ENCODE measurements at regions of chr4 and their contacts with region 1.

Region 1: GRCh38 chr4:143335979-143336780 is 496 bp upstream of the GAB1 start:
- DNase-seq: peak; percentile 92
- H3K4me3 ChIP-seq: peak overlapping the region; percentile 54 to 93 (median 86)
- H3K27ac ChIP-seq: peak overlapping the region; percentile 95 to 97 (median 96)
- H3K4me1 ChIP-seq: peaks cover 17 to 38% (median 31%) of the 10 kb centered on the region in 4 donors
- H3K27me3 ChIP-seq: no peaks in the 10 kb centered on the region
- CTCF ChIP-seq: no peak
- EP300 ChIP-seq: no peak
- POLR2A ChIP-seq: peak; percentile 65

Region 2: GRCh38 chr4:141843136-141843535 is 1493.0 kb before region 1 on chr4:
- in situ Hi-C with region 1: no loop called
- intact Hi-C with region 1: no loop called
- DNase-seq: no peak
- H3K4me3 ChIP-seq: no peak overlapping the region
- H3K27ac ChIP-seq: no peak overlapping the region
- H3K4me1 ChIP-seq: no peaks in the 10 kb centered on the region
- H3K27me3 ChIP-seq: no peaks in the 10 kb centered on the region
- CTCF ChIP-seq: no peak
- EP300 ChIP-seq: no peak
- POLR2A ChIP-seq: no peak

Region 3: DNA sequence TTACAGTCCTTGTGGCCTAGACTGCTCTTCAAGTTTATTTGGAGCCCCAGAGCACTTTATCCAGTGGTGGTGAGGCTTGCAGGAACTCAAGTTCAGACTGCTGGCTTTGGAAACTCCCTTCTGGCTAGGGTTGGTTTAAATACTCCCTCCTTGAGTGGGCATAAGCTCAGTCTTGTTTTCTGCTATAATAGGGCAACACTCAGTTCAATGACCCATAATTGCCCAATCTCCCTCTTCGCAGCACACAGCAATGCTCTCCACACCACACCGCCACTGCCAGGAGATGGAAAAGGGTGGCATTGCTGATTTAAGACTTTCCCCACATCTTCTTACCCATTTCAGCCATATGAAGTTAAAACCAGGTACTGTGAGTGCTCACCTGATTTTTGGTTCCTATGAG is 179.3 kb before region 1 on chr4:
- in situ Hi-C with region 1: no loop called
- intact Hi-C with region 1: no loop called
- DNase-seq: no peak
- H3K4me3 ChIP-seq: no peak overlapping the region
- H3K27ac ChIP-seq: no peak overlapping the region
- H3K4me1 ChIP-seq: no peaks in the 10 kb centered on the region
- H3K27me3 ChIP-seq: no peaks in the 10 kb centered on the region
- CTCF ChIP-seq: no peak
- EP300 ChIP-seq: no peak
- POLR2A ChIP-seq: no peak

Region 4: DNA sequence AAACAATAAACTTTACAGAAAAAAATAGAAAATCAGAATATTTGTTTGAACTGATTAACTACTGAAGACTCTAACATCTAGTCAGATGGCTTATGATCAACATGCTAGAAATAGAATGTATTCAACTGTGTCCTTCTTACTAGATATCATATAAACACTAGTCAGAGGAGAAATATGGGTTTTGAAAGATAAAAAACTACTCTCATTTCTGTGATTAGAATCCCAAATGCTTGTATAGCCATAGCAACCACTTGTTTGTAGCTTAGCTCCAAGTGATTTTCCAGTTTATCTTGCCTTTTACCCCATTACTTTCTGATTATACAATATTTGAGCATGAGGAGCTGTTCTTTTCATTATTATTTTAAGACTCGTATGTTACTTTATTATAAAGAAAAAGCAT is 120.3 kb before region 1 on chr4:
- in situ Hi-C with region 1: no loop called
- intact Hi-C with region 1: loop called (anchors 5 kb)
- DNase-seq: no peak
- H3K4me3 ChIP-seq: no peak overlapping the region
- H3K27ac ChIP-seq: no peak overlapping the region
- H3K4me1 ChIP-seq: no peaks in the 10 kb centered on the region
- H3K27me3 ChIP-seq: no peaks in the 10 kb centered on the region
- CTCF ChIP-seq: no peak
- EP300 ChIP-seq: no peak
- POLR2A ChIP-seq: no peak

Region 5: GRCh38 chr4:143406523-143406922 is 70.3 kb after region 1 on chr4:
- in situ Hi-C with region 1: no loop called
- intact Hi-C with region 1: no loop called
- DNase-seq: peak; percentile 45
- H3K4me3 ChIP-seq: no peak overlapping the region
- H3K27ac ChIP-seq: peak overlapping the region; percentile 26 to 45 (median 36)
- H3K4me1 ChIP-seq: peaks cover 19 to 88% (median 50%) of the 10 kb centered on the region in 4 donors
- H3K27me3 ChIP-seq: no peaks in the 10 kb centered on the region
- CTCF ChIP-seq: no peak
- EP300 ChIP-seq: no peak
- POLR2A ChIP-seq: no peak

Region 6: DNA sequence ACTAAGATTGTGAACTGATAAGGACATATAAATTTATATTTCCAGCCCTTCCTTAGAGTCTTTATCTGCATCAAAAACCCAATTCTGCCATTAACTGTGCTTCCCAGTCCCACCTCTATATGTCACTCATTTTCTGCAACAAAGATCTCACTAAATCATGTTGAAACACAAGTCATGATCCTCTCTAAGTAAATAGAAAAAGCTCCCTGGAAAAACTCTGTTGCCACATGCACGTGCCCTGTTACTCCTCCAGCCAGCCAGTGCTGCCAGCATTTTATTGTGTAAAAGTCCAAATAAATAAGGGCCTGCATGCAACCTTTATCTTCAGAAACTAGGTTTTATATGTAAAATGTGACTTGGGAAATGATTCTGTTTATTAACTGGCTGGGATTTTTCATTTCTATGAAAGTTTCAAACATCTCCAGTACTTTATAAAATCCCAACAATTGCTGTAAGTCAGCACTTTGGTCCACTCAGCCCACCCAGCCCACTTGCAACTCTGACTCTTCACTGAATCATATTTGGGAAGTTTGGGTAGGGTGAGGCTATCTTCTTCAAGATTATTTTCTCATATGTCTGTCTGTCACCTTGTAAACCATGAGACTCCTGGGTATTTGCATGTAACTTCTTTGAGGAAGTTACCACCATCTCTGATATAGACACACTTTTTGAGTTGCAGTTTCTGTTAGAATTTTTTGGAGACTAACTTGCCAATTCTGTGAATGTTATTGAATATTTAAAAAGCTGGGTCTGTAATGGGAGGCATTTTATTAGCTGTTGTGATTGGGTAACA is 137.3 kb after region 1 on chr4:
- in situ Hi-C with region 1: no loop called
- intact Hi-C with region 1: loop called (anchors 10 kb)
- DNase-seq: no peak
- H3K4me3 ChIP-seq: no peak overlapping the region
- H3K27ac ChIP-seq: no peak overlapping the region
- H3K4me1 ChIP-seq: no peaks in the 10 kb centered on the region
- H3K27me3 ChIP-seq: no peaks in the 10 kb centered on the region
- CTCF ChIP-seq: no peak
- EP300 ChIP-seq: no peak
- POLR2A ChIP-seq: no peak

Region 7: GRCh38 chr4:143513306-143514168 is 177.4 kb after region 1 on chr4 and contains the start of gene SMARCA5:
- in situ Hi-C with region 1: no loop called
- intact Hi-C with region 1: no loop called
- DNase-seq: peak; percentile 97
- H3K4me3 ChIP-seq: peak within 1 kb of the TSS; percentile 67 to 98 (median 90)
- H3K27ac ChIP-seq: peak within 1 kb of the TSS; percentile 96 to 100 (median 98)
- H3K4me1 ChIP-seq: peaks cover 18 to 36% (median 24%) of the 10 kb centered on the region in 4 donors
- H3K27me3 ChIP-seq: no peaks in the 10 kb centered on the region
- CTCF ChIP-seq: peak in 1 of 5 experiments; percentile 8
- EP300 ChIP-seq: no peak
- POLR2A ChIP-seq: peak; percentile 96
- total RNA-seq, gene SMARCA5: 12.3 to 44.1 (median 29.8) TPM

Measured in transverse colon (tissue), 4 donors.